ENCODE measurements at regions of chr10 and their contacts with region 1.

Region 1: DNA sequence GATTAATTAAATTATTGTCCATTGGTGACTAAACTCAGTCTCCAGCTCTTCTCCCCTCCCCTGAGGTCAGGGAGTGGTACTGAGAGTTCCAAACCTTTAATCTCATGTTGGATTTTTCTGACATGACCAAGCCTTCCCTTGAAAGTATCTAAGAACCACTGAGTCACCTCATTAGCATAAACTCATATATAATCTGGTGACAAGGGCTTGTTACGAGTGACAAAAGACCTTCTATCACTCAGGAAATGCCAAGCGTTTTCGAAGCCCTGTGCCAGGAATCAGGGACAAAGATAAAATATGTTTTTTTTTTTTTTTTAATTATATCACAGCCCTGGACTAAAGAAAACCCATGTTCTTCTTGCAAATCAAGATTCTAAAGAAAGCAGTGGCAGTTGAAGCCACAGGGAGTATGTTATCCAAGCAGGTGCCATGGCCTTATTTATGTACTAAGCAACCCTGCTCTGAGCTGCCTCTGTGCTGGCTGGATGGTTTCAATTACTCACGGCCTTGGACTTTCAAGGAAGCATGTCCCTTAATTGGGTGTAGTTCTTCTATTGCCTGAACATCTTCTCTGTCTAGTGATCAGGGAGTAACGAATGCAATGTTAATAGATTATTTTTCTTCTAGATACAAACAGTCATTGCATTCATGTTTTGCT is 169.0 kb upstream of the PRKCQ start:
- DNase-seq: peak; percentile 52 to 91
- H3K4me3 ChIP-seq: no peak overlapping the region
- H3K27ac ChIP-seq: peak overlapping the region; percentile 86
- H3K4me1 ChIP-seq: peaks cover 34% of the 10 kb centered on the region
- H3K27me3 ChIP-seq: no peaks in the 10 kb centered on the region
- CTCF ChIP-seq: no peak

Region 2: DNA sequence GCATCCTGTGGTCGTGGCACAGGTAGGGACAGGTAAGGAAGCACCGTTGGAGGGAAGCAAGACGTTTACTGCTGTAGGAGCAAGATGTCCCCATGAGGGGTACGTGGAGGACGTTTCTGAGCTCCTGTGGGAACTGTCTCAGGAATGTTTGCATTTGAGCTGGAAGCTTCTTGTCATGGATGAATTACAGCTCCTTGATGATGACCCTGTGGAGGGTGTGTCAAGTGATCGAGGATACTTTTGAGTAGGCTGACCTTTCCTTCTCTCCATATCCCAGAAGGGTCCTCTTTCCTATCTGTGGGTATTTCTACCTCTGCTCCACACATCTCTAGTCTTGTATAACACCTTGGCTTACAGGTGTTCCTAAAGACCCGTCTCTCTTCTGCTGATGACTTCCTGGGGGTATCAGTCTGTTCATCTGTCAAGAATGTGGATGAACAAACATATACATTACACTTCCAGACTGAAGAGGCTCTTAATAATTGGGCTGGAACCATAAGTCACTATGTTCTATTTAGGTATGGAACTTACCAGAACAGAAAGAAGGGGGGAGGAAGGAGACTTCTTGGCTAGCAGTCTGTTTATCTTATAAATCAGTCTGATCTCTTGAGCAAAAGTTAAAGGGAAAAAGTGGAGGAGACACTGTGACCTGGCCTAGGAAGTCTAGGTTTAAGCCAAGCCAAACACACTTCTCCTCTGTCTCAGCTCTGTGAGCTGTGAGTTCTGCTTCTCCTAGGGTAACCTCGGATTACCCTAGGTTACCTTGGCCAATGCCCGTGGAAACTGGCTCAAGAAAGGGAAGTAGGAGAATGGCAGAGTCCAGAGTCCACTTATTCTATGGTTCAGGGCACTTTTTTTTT is 451.4 kb before region 1 on chr10:
- CTCF ChIA-PET with region 1: no interaction called
- POLR2A ChIA-PET with region 1: no interaction called
- intact Hi-C with region 1: loop called (anchors 10 kb)
- DNase-seq: peak in 1 of 2 experiments; percentile 88
- H3K4me3 ChIP-seq: no peak overlapping the region
- H3K27ac ChIP-seq: peak overlapping the region; percentile 85
- H3K4me1 ChIP-seq: peaks cover 62% of the 10 kb centered on the region
- H3K27me3 ChIP-seq: no peaks in the 10 kb centered on the region
- CTCF ChIP-seq: no peak

Region 3: DNA sequence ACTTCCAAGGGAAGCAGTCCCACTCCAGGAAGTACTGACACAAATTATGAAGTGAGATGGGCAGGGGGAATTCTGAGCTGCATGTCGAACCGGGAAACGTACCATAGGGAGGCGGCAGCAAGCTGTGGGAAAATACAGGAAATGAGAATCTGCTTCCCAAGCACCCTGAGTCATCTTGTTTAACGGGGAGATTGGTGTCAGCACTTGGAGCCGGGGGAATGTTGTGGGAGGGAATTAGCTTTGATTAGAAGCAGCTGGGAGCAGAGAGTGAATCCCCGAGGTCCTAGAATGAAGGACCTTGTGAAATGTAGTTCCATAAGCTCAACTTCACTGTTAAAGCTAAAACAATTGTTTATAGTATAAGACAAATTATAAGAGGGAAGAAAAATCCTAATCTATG is 27.6 kb before region 1 on chr10:
- CTCF ChIA-PET with region 1: interaction called, 3 read pairs
- POLR2A ChIA-PET with region 1: interaction called, 6 read pairs
- intact Hi-C with region 1: loop called (anchors 1 kb)
- DNase-seq: peak; percentile 50 to 66
- H3K4me3 ChIP-seq: no peak overlapping the region; the same call in 1 of the 2 replicates
- H3K27ac ChIP-seq: peak overlapping the region; percentile 97
- H3K4me1 ChIP-seq: peaks cover 21% of the 10 kb centered on the region
- H3K27me3 ChIP-seq: no peaks in the 10 kb centered on the region
- CTCF ChIP-seq: peak; percentile 30; the same call in 1 of the 2 replicates

Region 4: GRCh38 chr10:6778992-6779701 is 30.0 kb after region 1 on chr10:
- CTCF ChIA-PET with region 1: no interaction called
- POLR2A ChIA-PET with region 1: no interaction called
- intact Hi-C with region 1: loop called (anchors 2 kb)
- DNase-seq: peak; percentile 85 to 94
- H3K4me3 ChIP-seq: no peak overlapping the region; the same call in 1 of the 2 replicates
- H3K27ac ChIP-seq: peak overlapping the region; percentile 72
- H3K4me1 ChIP-seq: peaks cover 10% of the 10 kb centered on the region
- H3K27me3 ChIP-seq: no peaks in the 10 kb centered on the region
- CTCF ChIP-seq: no peak

Region 5: GRCh38 chr10:7260412-7260900 is 511.3 kb after region 1 on chr10:
- CTCF ChIA-PET with region 1: no interaction called
- POLR2A ChIA-PET with region 1: no interaction called
- intact Hi-C with region 1: loop called (anchors 2 kb)
- DNase-seq: peak in 1 of 2 experiments; percentile 2
- H3K4me3 ChIP-seq: no peak overlapping the region
- H3K27ac ChIP-seq: no peak overlapping the region
- H3K4me1 ChIP-seq: no peaks in the 10 kb centered on the region
- H3K27me3 ChIP-seq: peaks cover 4% of the 10 kb centered on the region; the same call in 1 of the 2 replicates
- CTCF ChIP-seq: peak; percentile 37; the same call in 1 of the 2 replicates

Measured in PC-9 (cell line).